PC-9 (cell line): ENCODE measurements at regions of chr10 and their contacts with region 1.

Region 1: GRCh38 chr10:117830205-117830604 is 216.5 kb downstream of the RAB11FIP2 start:
- DNase-seq: no peak
- H3K4me3 ChIP-seq: no peak overlapping the region
- H3K27ac ChIP-seq: no peak overlapping the region
- H3K4me1 ChIP-seq: no peaks in the 10 kb centered on the region
- H3K27me3 ChIP-seq: peaks cover 11% of the 10 kb centered on the region
- CTCF ChIP-seq: no peak

Region 2: DNA sequence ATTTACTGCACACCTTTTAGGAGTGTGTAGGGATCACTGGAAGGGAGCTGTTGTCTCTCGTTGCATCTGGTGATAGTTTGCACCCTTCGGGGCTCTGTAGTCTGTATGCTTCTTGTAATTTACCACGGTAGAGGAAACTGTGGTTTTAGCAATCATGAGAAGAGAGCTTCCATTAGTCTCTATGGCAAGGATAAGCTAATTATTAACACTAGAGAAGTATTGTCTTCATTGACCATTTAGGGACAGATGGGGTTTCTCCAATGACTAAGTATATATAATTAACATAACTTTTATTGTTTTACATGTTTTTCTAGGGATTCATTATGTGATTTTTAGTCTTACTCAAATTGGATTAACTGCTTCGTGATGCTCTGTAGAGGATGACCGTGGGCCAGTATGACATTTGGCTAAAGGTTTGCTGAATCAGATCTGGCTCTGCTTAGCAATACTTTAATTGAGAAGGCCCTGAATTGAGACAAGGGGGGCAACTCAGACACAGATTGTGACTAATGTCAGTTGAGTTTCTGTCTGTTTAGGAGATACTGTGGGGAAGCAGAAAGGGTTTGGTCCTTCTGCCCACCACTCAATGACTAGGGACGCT is 580.6 kb before region 1 on chr10:
- CTCF ChIA-PET with region 1: no interaction called
- POLR2A ChIA-PET with region 1: no interaction called
- intact Hi-C with region 1: no loop called
- DNase-seq: no peak
- H3K4me3 ChIP-seq: no peak overlapping the region
- H3K27ac ChIP-seq: no peak overlapping the region
- H3K4me1 ChIP-seq: no peaks in the 10 kb centered on the region
- H3K27me3 ChIP-seq: no peaks in the 10 kb centered on the region; the same call in 1 of the 2 replicates
- CTCF ChIP-seq: no peak

Region 3: DNA sequence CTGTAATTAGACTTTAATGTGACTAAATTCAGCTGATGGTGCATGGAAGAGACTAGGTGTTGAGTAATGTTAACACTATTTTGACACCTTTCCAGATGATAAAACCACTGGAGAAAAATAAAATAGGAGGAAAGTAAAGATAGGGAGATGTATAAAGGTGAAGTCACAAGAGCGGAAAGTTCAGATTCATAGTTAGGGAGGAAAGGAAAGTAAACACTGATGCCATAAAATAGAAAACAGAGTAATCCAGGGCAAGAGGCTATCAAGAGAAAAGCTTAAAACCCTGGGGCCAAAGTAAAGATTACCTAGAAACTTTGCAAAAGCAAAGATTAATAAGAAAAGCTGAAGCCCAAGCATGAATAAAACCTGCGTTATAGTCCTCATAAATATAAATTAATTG is 153.8 kb after region 1 on chr10:
- CTCF ChIA-PET with region 1: no interaction called
- POLR2A ChIA-PET with region 1: interaction called, 14 read pairs
- intact Hi-C with region 1: no loop called
- DNase-seq: no peak
- H3K4me3 ChIP-seq: no peak overlapping the region
- H3K27ac ChIP-seq: no peak overlapping the region
- H3K4me1 ChIP-seq: 0 out of 2 replicates have a peak, but pooled peaks cover 5% of the 10 kb centered on the region
- H3K27me3 ChIP-seq: no peaks in the 10 kb centered on the region
- CTCF ChIP-seq: no peak